ENCODE measurements at regions of chr10 and their contacts with region 1.

Region 1: DNA sequence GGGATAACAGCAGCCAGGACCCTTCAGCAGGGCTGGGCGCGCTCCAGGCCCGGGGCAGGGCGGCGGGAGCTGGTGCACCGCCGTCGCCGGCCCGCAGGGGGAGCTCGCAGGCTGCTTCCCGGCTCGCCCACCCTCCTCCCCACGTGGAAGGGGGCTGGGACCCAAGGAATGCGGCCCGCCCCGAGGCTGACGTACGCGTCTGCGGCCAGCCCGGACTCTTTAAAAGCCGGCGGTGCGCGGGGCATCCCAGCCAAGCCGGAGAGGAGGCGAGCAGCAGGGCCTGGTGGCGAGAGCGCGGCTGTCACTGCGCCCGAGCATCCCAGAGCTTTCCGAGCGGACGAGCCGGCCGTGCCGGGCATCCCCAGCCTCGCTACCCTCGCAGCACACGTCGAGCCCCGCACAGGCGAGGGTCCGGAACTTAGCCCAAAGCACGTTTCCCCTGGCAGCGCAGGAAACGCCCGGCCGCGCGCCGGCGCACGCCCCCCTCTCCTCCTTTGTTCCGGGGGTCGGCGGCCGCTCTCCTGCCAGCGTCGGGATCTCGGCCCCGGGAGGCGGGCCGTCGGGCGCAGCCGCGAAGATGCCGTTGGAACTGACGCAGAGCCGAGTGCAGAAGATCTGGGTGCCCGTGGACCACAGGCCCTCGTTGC is at the start of gene PFKFB3:
- H3K4me3 ChIP-seq: peak within 1 kb of the TSS; percentile 62
- H3K27ac ChIP-seq: peak within 1 kb of the TSS; percentile 66; the same call in 1 of the 2 replicates
- H3K4me1 ChIP-seq: peaks cover 16% of the 10 kb centered on the region
- CTCF ChIP-seq: peak; percentile 95

Region 2: DNA sequence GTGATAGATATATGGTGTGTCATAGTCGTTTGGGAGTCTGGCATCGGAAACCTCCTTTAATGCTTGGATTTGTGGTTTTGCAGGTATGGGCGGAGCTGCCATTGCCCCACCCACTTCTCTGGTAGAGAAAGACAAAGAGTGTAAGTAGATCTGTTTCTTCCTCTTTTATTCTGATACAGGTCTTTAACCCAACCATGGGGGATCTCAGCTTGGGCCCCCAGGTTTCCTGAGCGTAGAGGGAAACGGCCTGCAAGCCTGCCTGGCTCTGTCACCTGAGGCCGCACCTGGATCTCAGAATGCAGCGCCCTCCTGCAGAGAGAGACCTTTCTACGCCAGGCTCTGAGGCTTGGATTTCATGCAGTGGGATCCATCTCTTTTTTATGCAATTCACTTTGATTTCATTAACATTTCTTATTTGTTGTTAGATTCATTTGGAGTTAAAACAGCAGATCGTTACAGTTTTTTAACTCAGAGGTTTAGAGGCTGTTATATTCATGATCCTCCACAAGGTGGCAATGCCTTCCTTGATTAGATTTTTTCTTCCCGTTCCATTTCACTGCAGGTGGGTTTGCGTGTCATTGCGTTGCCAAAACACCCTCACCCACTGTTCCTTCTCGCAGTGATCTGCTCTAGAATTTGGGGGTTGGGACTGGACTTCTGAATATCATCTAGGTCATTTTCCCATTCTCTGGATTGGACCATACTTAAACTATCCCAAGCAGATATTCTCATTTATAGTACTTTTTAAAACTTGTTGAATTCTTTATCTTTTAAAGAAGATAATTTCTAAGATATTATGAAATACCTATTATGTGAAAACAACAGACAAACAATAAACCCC is 94.0 kb before region 1 on chr10:
- CTCF ChIA-PET with region 1: interaction called, 11 read pairs
- POLR2A ChIA-PET with region 1: interaction called, 7 read pairs
- H3K4me3 ChIP-seq: no peak overlapping the region
- H3K27ac ChIP-seq: no peak overlapping the region
- H3K4me1 ChIP-seq: no peaks in the 10 kb centered on the region
- CTCF ChIP-seq: no peak

Region 3: GRCh38 chr10:6144406-6145165 is 58.2 kb before region 1 on chr10:
- CTCF ChIA-PET with region 1: interaction called, 3 read pairs
- POLR2A ChIA-PET with region 1: interaction called, 10 read pairs
- H3K4me3 ChIP-seq: peak overlapping the region; percentile 60
- H3K27ac ChIP-seq: peak overlapping the region; percentile 71; the same call in 1 of the 2 replicates
- H3K4me1 ChIP-seq: no peaks in the 10 kb centered on the region
- CTCF ChIP-seq: no peak

Region 4: DNA sequence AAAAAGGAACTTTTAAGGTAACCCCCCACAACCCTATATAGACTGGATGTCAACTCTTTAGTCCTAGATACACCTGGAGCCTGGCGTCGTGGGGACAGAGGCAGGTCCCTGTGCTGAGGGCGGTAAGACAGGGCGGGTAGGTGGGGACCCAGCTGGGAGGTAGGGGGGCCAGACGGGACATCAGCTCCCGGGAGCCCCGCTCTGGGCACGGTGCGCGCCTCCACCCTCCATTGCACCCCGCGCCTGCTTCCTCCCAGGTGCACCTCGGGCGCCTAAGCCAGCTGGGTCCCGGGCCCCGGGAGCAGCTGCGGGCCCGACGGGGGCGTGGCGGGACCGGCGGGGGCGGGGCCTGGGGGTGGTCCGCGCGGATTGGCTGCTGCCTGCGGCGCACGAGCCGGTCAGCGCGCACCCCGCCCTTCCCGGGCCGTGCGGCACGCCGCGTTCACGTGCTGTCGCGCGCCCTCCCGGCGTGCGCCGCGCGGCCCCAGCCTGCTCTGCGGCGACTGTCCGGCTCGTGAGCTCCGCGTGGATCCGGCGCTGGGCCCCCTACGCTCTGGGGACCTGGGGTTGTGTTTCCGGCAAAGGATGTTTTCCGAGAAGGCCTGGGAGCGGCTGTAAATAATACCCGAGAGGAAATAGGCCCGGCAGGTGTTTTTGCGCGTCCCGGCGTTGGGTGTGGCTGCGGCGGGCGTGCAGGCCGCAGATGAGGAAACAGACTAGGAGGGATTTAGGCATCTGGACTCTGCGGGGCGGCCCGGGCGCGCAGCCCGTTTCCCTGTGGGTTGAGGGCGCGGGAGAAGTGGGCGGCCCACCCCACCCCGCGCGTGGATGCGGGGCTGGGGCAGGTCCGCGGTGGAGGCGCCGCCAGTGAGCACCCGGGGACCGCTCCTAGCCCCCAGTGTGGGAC is 39.2 kb before region 1 on chr10:
- CTCF ChIA-PET with region 1: interaction called, 3 read pairs
- POLR2A ChIA-PET with region 1: interaction called, 19 read pairs
- H3K4me3 ChIP-seq: peak overlapping the region; percentile 69
- H3K27ac ChIP-seq: peak overlapping the region; percentile 93; the same call in 1 of the 2 replicates
- H3K4me1 ChIP-seq: peaks cover 7% of the 10 kb centered on the region
- CTCF ChIP-seq: no peak

Region 5: GRCh38 chr10:6275022-6275997 is 72.5 kb after region 1 on chr10:
- CTCF ChIA-PET with region 1: no interaction called
- POLR2A ChIA-PET with region 1: interaction called, 13 read pairs
- H3K4me3 ChIP-seq: peak overlapping the region; percentile 41
- H3K27ac ChIP-seq: peak overlapping the region; percentile 2; the same call in 1 of the 2 replicates
- H3K4me1 ChIP-seq: no peaks in the 10 kb centered on the region
- CTCF ChIP-seq: no peak